ENCODE measurements at regions of chr6 and their contacts with region 1.

Region 1: GRCh38 chr6:12289933-12290820 is at the start of gene EDN1:
- DNase-seq: peak; percentile 68 to 72
- ATAC-seq: peak; percentile 79 to 94 (median 90)
- H3K4me3 ChIP-seq: peak within 1 kb of the TSS; percentile 29 to 62 (median 54)
- H3K27ac ChIP-seq: peak within 1 kb of the TSS in 9 of 10 donors; percentile 6 to 75 (median 52)
- H3K4me1 ChIP-seq: peaks cover 0 to 34% (median 15%) of the 10 kb centered on the region in 9 donors
- H3K27me3 ChIP-seq: peaks cover 0 to 38% (median 15%) of the 10 kb centered on the region in 7 donors
- CTCF ChIP-seq: peak; percentile 10 to 65 (median 55)
- total RNA-seq, gene EDN1: 0.36 to 6.3 (median 3.3) TPM

Region 2: DNA sequence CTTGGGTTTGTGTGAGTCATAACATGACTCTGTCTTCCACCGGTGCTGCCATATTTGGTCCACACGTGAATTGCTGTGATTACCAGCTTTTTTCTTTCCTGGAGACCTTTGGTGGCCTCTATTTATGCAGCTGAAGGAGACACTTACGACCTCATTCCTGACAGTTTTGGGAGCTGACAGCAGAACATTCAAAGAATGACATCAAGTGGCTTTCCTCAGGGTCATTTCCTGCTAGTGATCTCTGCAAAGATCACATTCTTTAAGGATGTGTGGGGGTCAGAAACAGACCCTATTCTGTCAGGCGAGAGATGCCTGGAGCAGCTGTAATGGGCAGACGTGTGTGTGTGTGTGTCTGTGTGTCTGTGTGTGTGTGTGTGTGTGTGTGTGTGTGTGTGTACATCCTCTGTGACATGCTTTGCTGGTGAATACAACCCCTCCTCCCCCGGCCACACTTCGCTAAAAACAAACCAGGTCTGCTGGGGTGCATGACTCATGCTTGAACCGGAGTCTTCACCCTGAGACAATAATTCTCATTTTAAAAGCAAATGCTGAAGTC is 637.1 kb before region 1 on chr6:
- intact Hi-C with region 1: loop called in 8 of 10 experiments (anchors 1 to 10 kb)
- DNase-seq: peak in 1 of 2 donors; percentile 31
- ATAC-seq: peak in 7 of 8 donors; percentile 27 to 68 (median 46)
- H3K4me3 ChIP-seq: no peak overlapping the region
- H3K27ac ChIP-seq: peak overlapping the region in 1 of 10 donors; percentile 61
- H3K4me1 ChIP-seq: peaks cover 0 to 67% (median 40%) of the 10 kb centered on the region in 9 donors
- H3K27me3 ChIP-seq: no peaks in the 10 kb centered on the region
- CTCF ChIP-seq: no peak

Region 3: DNA sequence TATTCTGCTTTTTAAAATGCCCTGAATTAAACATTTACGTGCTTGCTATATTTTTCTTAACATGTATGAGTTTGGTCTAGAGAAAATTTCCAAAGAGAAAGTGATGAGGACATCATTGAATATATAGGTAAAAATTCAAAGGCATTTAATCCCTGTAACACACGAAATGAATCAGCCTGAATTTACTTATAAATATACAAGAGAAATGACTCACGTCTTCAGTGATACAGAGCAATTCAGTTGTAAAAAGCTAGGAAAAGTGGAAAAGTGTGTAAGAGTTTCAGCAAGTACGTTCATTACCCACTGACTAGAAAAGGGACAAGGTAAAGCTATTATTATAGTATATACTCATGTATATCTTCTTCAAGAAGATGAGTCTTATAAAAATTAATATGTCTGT is 153.3 kb before region 1 on chr6:
- intact Hi-C with region 1: no loop called
- DNase-seq: no peak
- ATAC-seq: no peak
- H3K4me3 ChIP-seq: no peak overlapping the region
- H3K27ac ChIP-seq: no peak overlapping the region
- H3K4me1 ChIP-seq: peaks cover 0 to 21% (median 10%) of the 10 kb centered on the region in 9 donors
- H3K27me3 ChIP-seq: no peaks in the 10 kb centered on the region
- CTCF ChIP-seq: no peak

Region 4: GRCh38 chr6:12150812-12151432 is 139.3 kb before region 1 on chr6:
- intact Hi-C with region 1: no loop called
- DNase-seq: no peak
- ATAC-seq: no peak
- H3K4me3 ChIP-seq: no peak overlapping the region
- H3K27ac ChIP-seq: no peak overlapping the region
- H3K4me1 ChIP-seq: no peaks in the 10 kb centered on the region
- H3K27me3 ChIP-seq: no peaks in the 10 kb centered on the region
- CTCF ChIP-seq: peak in 7 of 9 donors; percentile 24 to 50 (median 38)

Region 5: DNA sequence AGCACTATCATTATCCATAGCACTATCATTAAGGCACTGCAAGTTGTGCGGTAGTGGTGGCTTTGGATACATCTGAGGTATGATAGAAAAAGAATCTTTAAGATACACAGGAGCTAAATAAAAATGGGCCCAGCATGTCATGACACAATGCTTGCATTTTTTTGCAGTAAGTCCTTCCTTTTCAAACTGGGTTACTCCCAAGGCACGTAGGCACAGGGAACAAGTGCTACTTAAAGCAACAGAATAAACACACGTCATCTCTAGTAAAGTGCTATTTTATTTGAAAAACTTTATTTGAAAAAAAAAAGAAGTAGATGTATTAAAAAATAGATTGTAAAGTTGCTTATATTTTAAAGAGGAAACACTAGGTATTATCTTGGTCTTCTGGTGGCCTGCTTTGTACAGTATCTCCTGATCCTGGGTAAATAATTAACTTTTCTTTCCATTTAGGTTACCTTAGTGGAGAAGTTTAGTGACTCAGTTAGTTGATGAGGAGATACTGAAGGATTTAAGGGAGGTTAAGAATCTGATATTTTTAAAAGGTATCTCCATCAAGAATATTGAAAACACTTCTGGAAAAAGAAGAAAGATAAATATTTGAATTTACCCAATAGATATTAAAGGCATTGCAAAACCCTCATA is 129.6 kb after region 1 on chr6:
- intact Hi-C with region 1: loop called in 2 of 10 experiments (anchors 5 to 10 kb)
- DNase-seq: no peak
- ATAC-seq: no peak
- H3K4me3 ChIP-seq: no peak overlapping the region
- H3K27ac ChIP-seq: no peak overlapping the region
- H3K4me1 ChIP-seq: peaks cover 0 to 17% (median 5%) of the 10 kb centered on the region in 9 donors
- H3K27me3 ChIP-seq: no peaks in the 10 kb centered on the region
- CTCF ChIP-seq: no peak

Region 6: DNA sequence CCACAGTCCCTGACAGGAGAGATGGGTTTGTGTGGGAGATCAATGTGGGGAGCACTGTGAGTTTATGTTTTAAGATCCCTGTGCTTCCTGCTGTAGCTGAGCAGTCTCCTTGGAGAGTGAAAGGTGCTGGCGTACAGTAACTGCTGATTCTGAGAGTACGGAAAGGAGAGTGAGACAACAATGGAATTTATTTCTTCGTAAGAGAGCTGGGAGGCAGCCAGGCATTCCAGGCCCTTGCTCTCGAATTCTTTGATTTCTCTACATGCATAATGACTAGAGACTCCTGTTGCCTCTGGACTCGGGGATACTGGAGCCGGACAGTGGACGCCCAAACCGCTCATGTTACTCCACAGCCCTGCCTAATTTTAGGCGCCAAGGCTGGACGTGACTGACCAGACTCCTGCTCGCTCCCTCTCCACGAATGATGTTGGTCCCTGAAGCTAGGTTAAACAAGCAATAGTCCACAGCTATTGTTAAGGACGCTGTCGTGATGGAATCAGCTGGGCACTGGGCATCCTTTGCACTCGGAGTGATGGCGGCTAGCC is 295.4 kb after region 1 on chr6:
- intact Hi-C with region 1: loop called in 1 of 10 experiments (anchors 5 kb)
- DNase-seq: peak; percentile 15 to 66
- ATAC-seq: peak; percentile 71 to 95 (median 83)
- H3K4me3 ChIP-seq: peak overlapping the region in 6 of 10 donors; percentile 6 to 37 (median 24)
- H3K27ac ChIP-seq: peak overlapping the region; percentile 32 to 82 (median 69)
- H3K4me1 ChIP-seq: peaks cover 0 to 24% (median 8%) of the 10 kb centered on the region in 9 donors
- H3K27me3 ChIP-seq: no peaks in the 10 kb centered on the region
- CTCF ChIP-seq: no peak